Panc1 (cell line): ENCODE measurements at regions of chr18 and their contacts with region 1.

Region 1: DNA sequence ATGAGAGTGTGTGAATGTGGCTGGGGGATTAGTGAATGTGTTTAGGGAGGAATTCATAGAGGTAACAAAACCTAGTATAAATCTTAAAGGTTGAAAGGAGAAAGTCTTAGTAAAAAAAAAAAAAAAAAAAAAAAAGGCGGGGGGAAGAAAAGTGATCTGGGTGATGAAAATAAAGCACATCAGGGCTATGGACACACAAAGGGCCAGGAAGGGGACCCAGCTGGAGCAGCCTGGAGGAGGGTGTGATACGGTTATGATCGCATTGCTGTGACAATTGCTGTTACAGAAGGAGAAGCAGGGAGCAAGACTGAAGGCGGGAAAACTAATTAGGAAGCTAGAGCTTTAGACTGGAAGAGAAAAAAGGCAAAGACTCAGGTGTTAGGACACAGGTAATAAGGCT is 85.4 kb downstream of the DLGAP1 start:
- DNase-seq: no peak
- ATAC-seq: no peak
- H3K4me3 ChIP-seq: no peak overlapping the region
- H3K27ac ChIP-seq: no peak overlapping the region
- H3K4me1 ChIP-seq: no peaks in the 10 kb centered on the region
- H3K27me3 ChIP-seq: no peaks in the 10 kb centered on the region
- CTCF ChIP-seq: no peak

Region 2: GRCh38 chr18:4203568-4204437 is 165.9 kb before region 1 on chr18:
- CTCF ChIA-PET with region 1: no interaction called
- POLR2A ChIA-PET with region 1: no interaction called
- in situ Hi-C with region 1: no loop called
- intact Hi-C with region 1: no loop called
- DNase-seq: no peak
- ATAC-seq: no peak
- H3K4me3 ChIP-seq: no peak overlapping the region
- H3K27ac ChIP-seq: no peak overlapping the region
- H3K4me1 ChIP-seq: no peaks in the 10 kb centered on the region
- H3K27me3 ChIP-seq: no peaks in the 10 kb centered on the region
- CTCF ChIP-seq: no peak

Region 3: DNA sequence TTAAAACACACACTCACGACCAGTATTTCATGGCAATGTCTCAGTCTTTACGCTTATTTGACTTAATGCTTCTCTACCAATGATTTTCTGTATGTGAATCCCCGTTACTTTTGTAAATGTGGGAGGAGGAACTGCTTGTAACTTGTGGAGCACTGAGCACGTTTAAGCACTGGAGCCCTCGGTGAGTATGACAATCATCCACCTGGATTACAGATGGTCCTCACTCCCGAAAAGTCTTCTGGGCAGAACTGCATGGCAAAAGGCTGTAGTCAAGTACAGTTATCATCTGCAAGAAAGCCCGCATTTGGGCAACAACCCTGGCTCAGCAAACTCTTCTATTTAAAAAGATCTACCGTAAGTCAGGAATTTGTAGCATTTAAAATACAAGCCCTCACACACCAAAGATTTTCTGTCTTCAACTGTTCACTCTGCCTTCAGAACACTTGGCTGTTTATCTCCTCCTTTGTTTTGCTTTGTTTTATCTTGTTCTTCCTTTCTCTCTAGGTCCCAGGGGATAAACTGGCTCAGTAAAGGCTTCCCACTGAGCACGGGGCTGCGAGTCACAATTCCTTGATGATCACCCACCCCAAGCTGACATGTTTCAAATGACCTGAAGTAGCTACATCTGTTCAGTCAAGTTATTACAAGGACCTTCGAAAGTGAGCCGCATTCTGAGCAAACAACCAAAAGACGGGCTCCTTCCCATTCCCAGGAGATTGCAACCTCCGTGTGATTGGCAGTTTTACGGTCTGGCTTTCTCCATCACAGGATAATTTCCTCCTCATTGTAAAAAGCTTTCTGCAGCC is 16.8 kb before region 1 on chr18:
- CTCF ChIA-PET with region 1: no interaction called
- POLR2A ChIA-PET with region 1: no interaction called
- in situ Hi-C with region 1: no loop called
- intact Hi-C with region 1: no loop called
- DNase-seq: no peak
- ATAC-seq: no peak
- H3K4me3 ChIP-seq: no peak overlapping the region
- H3K27ac ChIP-seq: no peak overlapping the region
- H3K4me1 ChIP-seq: no peaks in the 10 kb centered on the region
- H3K27me3 ChIP-seq: no peaks in the 10 kb centered on the region; the same call in 1 of the 2 replicates
- CTCF ChIP-seq: no peak

Region 4: DNA sequence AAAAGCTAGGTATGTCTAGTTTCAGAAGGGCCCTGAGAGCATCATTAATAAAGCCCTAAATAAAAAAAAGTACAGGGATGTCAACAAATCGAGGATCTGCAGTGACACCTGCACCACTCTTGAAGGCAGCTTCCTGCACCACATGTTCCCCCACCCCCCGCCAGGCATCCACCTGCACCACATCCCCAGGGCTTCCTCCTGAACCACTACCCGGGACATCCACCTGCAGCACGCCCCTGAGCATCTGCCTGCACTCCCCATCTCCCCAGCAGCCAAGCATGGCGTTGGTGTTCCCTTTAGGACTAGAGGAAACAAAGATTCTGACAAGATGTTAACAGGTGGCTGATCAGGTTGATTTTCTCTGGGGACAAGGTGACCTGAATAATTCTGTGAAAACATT is 30.2 kb after region 1 on chr18:
- CTCF ChIA-PET with region 1: no interaction called
- POLR2A ChIA-PET with region 1: no interaction called
- in situ Hi-C with region 1: no loop called
- intact Hi-C with region 1: no loop called
- DNase-seq: no peak
- ATAC-seq: no peak
- H3K4me3 ChIP-seq: no peak overlapping the region
- H3K27ac ChIP-seq: no peak overlapping the region
- H3K4me1 ChIP-seq: no peaks in the 10 kb centered on the region; the same call in 1 of the 2 replicates
- H3K27me3 ChIP-seq: no peaks in the 10 kb centered on the region
- CTCF ChIP-seq: no peak

Region 5: DNA sequence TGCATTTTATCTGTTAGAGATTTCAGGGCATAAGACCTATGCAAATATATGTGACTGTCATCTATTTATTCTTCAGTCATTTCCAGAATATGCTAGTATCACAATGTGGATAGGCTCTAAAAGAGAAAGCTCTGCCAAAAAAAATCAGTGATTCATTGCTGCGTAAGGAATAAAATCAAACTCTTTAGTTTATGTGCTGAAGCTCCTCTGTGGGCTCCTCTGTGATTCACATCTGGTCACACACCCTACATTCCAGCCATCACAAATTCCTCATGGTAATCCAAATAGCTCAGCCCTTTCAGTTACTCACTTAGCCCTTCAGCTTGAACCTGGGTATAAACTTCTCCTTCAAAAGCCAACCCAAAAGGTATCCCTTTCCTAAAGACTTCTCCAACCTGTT is 64.0 kb after region 1 on chr18:
- CTCF ChIA-PET with region 1: no interaction called
- POLR2A ChIA-PET with region 1: no interaction called
- in situ Hi-C with region 1: no loop called
- intact Hi-C with region 1: loop called (anchors 10 kb)
- DNase-seq: no peak
- ATAC-seq: no peak
- H3K4me3 ChIP-seq: no peak overlapping the region
- H3K27ac ChIP-seq: no peak overlapping the region
- H3K4me1 ChIP-seq: no peaks in the 10 kb centered on the region
- H3K27me3 ChIP-seq: no peaks in the 10 kb centered on the region
- CTCF ChIP-seq: no peak

Region 6: DNA sequence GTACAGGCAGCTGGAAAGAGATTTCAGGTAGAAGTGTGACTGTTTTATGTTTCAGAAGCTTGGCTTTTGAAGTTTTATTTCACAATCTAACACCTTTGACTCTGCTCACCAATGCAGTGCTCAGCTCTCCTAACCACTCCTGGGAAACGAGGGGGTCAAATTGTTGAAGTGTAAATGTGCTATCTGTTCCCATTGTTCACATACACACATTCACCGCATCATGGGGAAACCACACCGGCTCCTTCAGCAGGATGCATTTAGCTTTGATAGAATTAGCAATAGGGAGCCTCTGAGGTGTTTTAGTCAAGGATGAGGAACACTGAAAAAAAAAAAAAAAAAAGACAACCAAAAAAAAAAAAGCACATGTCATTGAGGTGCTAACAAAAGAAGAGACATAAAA is 98.8 kb after region 1 on chr18:
- CTCF ChIA-PET with region 1: no interaction called
- POLR2A ChIA-PET with region 1: no interaction called
- in situ Hi-C with region 1: no loop called
- intact Hi-C with region 1: loop called (anchors 10 kb)
- DNase-seq: no peak
- ATAC-seq: no peak
- H3K4me3 ChIP-seq: no peak overlapping the region
- H3K27ac ChIP-seq: no peak overlapping the region
- H3K4me1 ChIP-seq: no peaks in the 10 kb centered on the region
- H3K27me3 ChIP-seq: no peaks in the 10 kb centered on the region
- CTCF ChIP-seq: no peak

Region 7: GRCh38 chr18:4510711-4511110 is 141.0 kb after region 1 on chr18:
- CTCF ChIA-PET with region 1: no interaction called
- POLR2A ChIA-PET with region 1: no interaction called
- in situ Hi-C with region 1: no loop called
- intact Hi-C with region 1: no loop called
- DNase-seq: no peak
- ATAC-seq: no peak
- H3K4me3 ChIP-seq: no peak overlapping the region
- H3K27ac ChIP-seq: no peak overlapping the region
- H3K4me1 ChIP-seq: no peaks in the 10 kb centered on the region
- H3K27me3 ChIP-seq: no peaks in the 10 kb centered on the region
- CTCF ChIP-seq: no peak